ENCODE measurements at regions of chr6 and their contacts with region 1.

Region 1: DNA sequence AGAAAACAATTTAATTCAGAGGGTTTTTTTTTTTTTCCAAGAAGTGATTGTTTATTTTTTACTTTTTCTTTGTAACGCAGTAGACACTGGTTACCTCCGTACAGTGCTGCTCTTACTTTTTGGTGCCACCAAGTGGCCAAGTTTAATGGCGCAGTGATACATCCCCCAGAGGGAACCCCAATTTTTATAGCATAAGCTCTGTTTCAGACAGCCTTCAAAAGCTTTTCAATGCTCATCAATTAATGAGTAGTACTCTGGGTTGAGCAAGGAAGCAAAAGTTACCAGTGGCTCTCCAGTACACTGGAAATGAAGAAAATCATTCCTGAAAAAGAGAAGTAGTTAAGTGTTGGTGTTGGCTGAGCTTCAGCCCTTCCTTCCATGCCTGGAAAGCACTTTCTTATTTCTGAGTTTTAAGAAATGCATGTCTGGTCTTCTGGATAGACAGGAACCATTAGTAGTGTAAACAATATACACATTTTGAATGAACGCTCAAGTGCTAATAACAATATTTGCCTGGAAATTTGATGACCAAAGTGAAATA is 129.1 kb upstream of the SMLR1 start:
- DNase-seq: peak; percentile 50
- H3K4me3 Mint-ChIP-seq: no peak overlapping the region
- H3K27ac Mint-ChIP-seq: peak overlapping the region; percentile 48
- H3K4me1 Mint-ChIP-seq: peaks cover 39% of the 10 kb centered on the region
- H3K27me3 Mint-ChIP-seq: peaks cover 6% of the 10 kb centered on the region

Region 2: GRCh38 chr6:130293800-130294199 is 404.3 kb before region 1 on chr6:
- intact Hi-C with region 1: loop called (anchors 1 kb)
- DNase-seq: no peak
- H3K4me3 Mint-ChIP-seq: no peak overlapping the region
- H3K27ac Mint-ChIP-seq: no peak overlapping the region
- H3K4me1 Mint-ChIP-seq: no peaks in the 10 kb centered on the region
- H3K27me3 Mint-ChIP-seq: peaks cover 4% of the 10 kb centered on the region

Region 3: GRCh38 chr6:130365166-130366106 is 332.6 kb before region 1 on chr6 and contains the start of gene TMEM200A:
- intact Hi-C with region 1: loop called (anchors 1 kb)
- DNase-seq: peak; percentile 41
- H3K4me3 Mint-ChIP-seq: peak within 1 kb of the TSS; percentile 78
- H3K27ac Mint-ChIP-seq: no peak within 1 kb of the TSS
- H3K4me1 Mint-ChIP-seq: peaks cover 25% of the 10 kb centered on the region
- H3K27me3 Mint-ChIP-seq: peaks cover 50% of the 10 kb centered on the region
- total RNA-seq, gene TMEM200A: 0.67 and 0.69 TPM in 2 replicates

Region 4: DNA sequence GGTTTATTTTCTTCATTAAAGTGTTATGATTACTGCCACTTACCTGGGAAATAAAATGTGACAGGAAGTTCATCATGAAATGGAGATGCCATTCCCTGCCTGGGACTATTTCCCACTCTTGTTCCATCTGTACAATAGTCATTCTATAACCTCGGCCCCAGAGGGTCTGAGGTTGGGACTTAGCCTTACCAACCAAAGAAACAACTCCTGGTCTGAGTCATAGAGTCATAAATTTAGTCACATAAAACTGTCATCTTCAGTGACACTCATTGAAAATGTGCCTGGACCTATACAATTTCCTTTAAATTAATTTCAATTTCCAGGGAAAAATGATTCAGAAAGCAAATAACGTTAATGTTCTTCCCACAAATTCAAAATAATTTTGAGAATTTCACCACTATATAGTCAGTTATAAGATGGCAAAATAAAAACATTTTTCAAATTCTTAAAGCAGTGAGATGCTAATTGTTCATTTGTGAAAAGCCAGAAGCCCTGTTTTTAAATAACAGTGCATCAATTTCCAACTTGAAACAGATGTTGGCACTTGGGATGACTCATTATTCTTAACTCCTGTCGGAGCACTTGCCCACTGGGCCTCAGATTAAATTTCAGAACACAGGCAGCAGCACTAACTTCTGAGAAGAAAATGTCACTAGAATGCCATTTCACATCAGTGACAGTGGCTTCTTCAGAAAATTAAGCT is 72.1 kb before region 1 on chr6:
- intact Hi-C with region 1: loop called (anchors 5 kb)
- DNase-seq: no peak
- H3K4me3 Mint-ChIP-seq: peak overlapping the region; percentile 15
- H3K27ac Mint-ChIP-seq: peak overlapping the region; percentile 81
- H3K4me1 Mint-ChIP-seq: peaks cover 49% of the 10 kb centered on the region
- H3K27me3 Mint-ChIP-seq: no peaks in the 10 kb centered on the region

Measured in activated T-helper 1 cell treated with anti-CD3 and anti-CD28 coated beads, Interleukin-12 subunit alpha, Interleukin-12 subunit beta, Interleukin-2, Interleukin-4 antibody, amounts not matched to agents 30 ng/mL and 10 ng/mL and 1 ng/mL, durations not matched to agents 14 hours and 24 hours and 36 hours (primary cell).